Lower lobe of right lung (tissue), 2 donors: ENCODE measurements at regions of chr6 and their contacts with region 1.

Region 1: DNA sequence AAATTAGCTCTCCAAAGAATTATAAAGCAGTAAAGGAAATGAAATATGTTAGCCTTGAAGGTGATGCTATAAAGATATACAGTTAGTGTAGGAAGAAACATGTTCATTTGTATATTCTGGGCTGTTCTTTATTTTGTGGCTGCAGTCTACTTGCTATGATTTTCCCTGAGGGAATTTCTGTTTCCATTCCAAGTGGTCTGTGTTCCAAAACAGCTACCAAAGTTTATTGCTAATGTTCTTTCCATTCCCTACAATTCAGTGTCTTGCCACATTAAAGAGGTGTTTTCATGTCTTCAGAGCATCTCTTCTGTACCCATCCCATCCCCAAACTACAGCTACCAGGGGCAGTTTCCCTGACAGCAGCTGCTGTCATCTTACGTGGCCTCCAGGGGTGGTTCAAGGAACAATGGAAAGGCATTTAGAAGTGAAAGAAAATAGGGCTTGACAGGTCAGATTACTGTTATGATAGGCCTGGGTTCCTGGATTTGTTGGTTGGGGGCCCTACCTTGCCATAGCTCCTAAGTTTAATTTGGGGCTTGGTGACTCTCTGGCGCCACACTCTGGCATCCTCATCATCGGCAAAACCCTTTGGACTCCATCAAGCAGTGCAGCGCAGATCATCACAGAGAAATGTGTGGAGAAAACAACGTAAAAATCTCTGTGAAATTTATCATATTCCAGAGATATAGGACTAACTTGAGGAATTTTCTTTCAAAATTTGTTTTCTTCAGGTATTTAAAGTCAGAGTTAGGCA is 33.8 kb upstream of the AIG1 start:
- DNase-seq: peak; percentile 48
- ATAC-seq: peak; percentile 66 to 83
- H3K4me3 ChIP-seq: no peak overlapping the region
- H3K27ac ChIP-seq: no peak overlapping the region
- H3K4me1 ChIP-seq: no peaks in the 10 kb centered on the region
- H3K27me3 ChIP-seq: no peaks in the 10 kb centered on the region
- CTCF ChIP-seq: peak; percentile 79

Region 2: DNA sequence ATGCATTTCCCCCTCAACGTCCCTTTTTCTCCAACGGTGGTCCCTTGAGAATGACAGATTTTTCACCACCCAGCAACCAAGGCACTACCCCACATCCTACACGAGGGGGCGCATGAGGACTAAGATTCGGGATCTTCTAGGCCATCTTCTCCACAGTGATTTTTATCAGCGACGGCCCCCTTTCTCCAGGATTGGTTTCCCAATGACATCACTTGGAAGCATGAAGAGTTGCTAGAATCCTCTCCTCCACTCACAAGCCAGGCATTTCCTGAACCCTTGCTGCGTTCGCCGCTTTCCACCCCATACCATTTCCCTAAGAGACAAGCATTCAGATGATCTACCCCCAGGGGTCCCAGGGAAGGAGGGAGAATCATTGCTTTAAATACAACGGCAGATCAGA is 333.9 kb before region 1 on chr6:
- intact Hi-C with region 1: loop called (anchors 5 kb)
- DNase-seq: peak; percentile 57
- ATAC-seq: peak; percentile 81 to 84
- H3K4me3 ChIP-seq: no peak overlapping the region
- H3K27ac ChIP-seq: no peak overlapping the region
- H3K4me1 ChIP-seq: peaks cover 14% of the 10 kb centered on the region
- H3K27me3 ChIP-seq: no peaks in the 10 kb centered on the region
- CTCF ChIP-seq: peak; percentile 92